Gastrocnemius medialis (tissue), 4 donors: ENCODE measurements at regions of chr17 and their contacts with region 1.

Region 1: GRCh38 chr17:4366327-4367063 is at the start of gene UBE2G1:
- DNase-seq: peak; percentile 95 to 97
- ATAC-seq: peak; percentile 61
- H3K4me3 ChIP-seq: peak within 1 kb of the TSS; percentile 79 to 100 (median 94)
- H3K27ac ChIP-seq: peak within 1 kb of the TSS; percentile 89 to 100 (median 98)
- H3K4me1 ChIP-seq: peaks cover 20 to 31% of the 10 kb centered on the region in 2 donors
- H3K27me3 ChIP-seq: no peaks in the 10 kb centered on the region
- CTCF ChIP-seq: peak in 3 of 5 experiments; percentile 33 to 51 (median 44)
- POLR2A ChIP-seq: peak; percentile 99
- total RNA-seq, gene UBE2G1: 152 to 217 (median 180) TPM

Region 2: GRCh38 chr17:4143563-4144421 is 222.7 kb before region 1 on chr17:
- in situ Hi-C with region 1: no loop called
- intact Hi-C with region 1: loop called (anchors 5 kb)
- DNase-seq: peak; percentile 76 to 90
- ATAC-seq: peak; percentile 79 to 81
- H3K4me3 ChIP-seq: peak overlapping the region; percentile 69 to 99 (median 95)
- H3K27ac ChIP-seq: peak overlapping the region; percentile 97 to 100 (median 99)
- H3K4me1 ChIP-seq: peaks cover 35 to 39% of the 10 kb centered on the region in 2 donors
- H3K27me3 ChIP-seq: no peaks in the 10 kb centered on the region
- CTCF ChIP-seq: no peak
- POLR2A ChIP-seq: peak; percentile 71 to 75

Region 3: GRCh38 chr17:4229627-4230541 is 136.6 kb before region 1 on chr17:
- in situ Hi-C with region 1: loop called in 1 of 4 experiments (anchors 10 kb)
- intact Hi-C with region 1: loop called (anchors 5 kb)
- DNase-seq: peak; percentile 75 to 77
- ATAC-seq: peak; percentile 87 to 90
- H3K4me3 ChIP-seq: peak overlapping the region; percentile 3 to 22 (median 17)
- H3K27ac ChIP-seq: peak overlapping the region; percentile 85 to 96 (median 90)
- H3K4me1 ChIP-seq: peaks cover 61 to 66% of the 10 kb centered on the region in 2 donors
- H3K27me3 ChIP-seq: no peaks in the 10 kb centered on the region
- CTCF ChIP-seq: no peak
- POLR2A ChIP-seq: no peak

Region 4: DNA sequence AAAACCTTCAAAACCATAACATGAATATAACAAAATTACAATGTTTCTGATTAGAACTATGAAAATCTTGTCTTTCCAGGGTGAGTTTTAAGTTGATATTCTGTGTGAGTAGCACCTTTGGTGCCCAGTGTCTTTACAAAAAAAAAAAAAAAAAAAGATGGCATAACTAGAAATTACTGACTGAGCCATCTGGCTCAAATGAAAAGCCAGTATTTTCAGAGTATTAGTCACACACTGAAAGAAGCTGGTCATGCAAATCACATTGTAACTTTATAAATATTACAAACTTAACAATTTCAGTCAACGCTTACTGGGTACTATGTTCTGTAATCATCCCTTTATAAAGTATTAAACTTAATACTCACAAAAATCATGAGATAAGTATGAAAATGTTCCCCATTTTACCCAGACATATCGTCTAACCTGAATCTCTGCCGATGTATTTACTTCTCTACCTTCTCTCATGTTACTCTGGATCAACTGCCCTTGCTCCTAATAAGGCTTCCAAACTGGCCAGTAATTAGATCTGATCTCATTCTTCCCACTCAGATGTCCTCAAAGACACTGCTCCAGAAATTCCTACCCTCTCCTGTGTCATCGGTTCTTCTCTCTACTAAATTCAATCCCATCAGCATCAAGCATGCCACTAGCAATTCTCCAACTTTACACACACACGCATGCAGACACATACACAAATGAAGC is 25.4 kb before region 1 on chr17:
- in situ Hi-C with region 1: no loop called
- intact Hi-C with region 1: loop called (anchors 2 kb)
- DNase-seq: peak in 1 of 2 donors; percentile 33
- ATAC-seq: peak; percentile 89
- H3K4me3 ChIP-seq: peak overlapping the region; percentile 9 to 32 (median 20)
- H3K27ac ChIP-seq: peak overlapping the region; percentile 74 to 94 (median 88)
- H3K4me1 ChIP-seq: peaks cover 78 to 91% of the 10 kb centered on the region in 2 donors
- H3K27me3 ChIP-seq: no peaks in the 10 kb centered on the region
- CTCF ChIP-seq: no peak
- POLR2A ChIP-seq: peak in 1 of 2 donors; percentile 28

Region 5: GRCh38 chr17:4412933-4413831 is 46.7 kb after region 1 on chr17:
- in situ Hi-C with region 1: no loop called
- intact Hi-C with region 1: loop called (anchors 5 kb)
- DNase-seq: peak; percentile 73 to 83
- ATAC-seq: peak; percentile 88 to 93
- H3K4me3 ChIP-seq: no peak overlapping the region
- H3K27ac ChIP-seq: peak overlapping the region in 2 of 4 donors; percentile 8 to 12
- H3K4me1 ChIP-seq: no peaks in the 10 kb centered on the region
- H3K27me3 ChIP-seq: no peaks in the 10 kb centered on the region
- CTCF ChIP-seq: peak; percentile 84 to 96 (median 94)
- POLR2A ChIP-seq: no peak